ENCODE measurements at regions of chr6 and their contacts with region 1.

Region 1: GRCh38 chr6:156876302-156876701 is 99.1 kb downstream of the ARID1B start:
- DNase-seq: no peak
- ATAC-seq: peak; percentile 34; the same call in 1 of the 3 replicates
- H3K4me3 ChIP-seq: no peak overlapping the region
- H3K27ac ChIP-seq: no peak overlapping the region
- H3K4me1 ChIP-seq: peaks cover under 1% of the 10 kb centered on the region; the same call in 1 of the 2 replicates
- H3K27me3 ChIP-seq: no peaks in the 10 kb centered on the region
- CTCF ChIP-seq: peak in 2 of 3 experiments; percentile 16 to 18; a peak in 2 of 6 replicates
- EP300 ChIP-seq: no peak
- POLR2A ChIP-seq: 0 out of 2 replicates have a peak, but pooled peaks have one; percentile 28
- RAD21 ChIP-seq: 0 out of 2 replicates have a peak, but pooled peaks have one; percentile 12

Region 2: DNA sequence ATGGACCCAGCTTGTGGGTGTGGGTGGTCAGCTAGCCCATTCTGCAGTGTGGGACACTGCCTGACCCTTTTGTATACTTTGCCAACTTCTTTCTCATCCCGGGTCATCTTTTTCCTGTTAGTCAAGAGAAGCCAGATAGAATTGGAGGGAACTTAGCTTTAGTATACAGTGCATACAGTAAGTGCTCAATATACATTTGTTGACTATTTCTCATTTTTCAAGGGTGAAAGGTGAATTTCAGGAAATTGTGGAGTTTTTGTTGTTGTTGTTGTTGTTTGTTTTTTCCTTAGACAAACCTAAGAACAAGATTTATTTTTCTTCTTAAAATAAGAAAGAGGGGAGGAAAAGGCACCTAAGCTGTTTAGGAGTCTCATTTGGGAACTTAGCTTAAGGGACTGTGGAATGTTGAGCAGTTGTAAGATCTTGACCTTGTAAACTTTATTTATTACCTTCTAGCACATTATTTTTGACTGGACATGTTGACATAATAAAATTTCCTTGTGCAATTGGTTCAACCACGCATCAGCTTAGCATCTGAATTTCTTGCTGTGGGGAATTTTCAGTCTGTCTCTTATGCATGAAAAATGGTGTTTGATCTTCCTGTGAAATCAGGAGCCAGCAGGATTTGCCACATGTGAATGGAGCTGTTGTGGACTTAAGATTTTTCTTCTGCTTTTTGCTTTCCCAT is 14.5 kb after region 1 on chr6:
- CTCF ChIA-PET with region 1: interaction called, 6 read pairs
- POLR2A ChIA-PET with region 1: interaction called, 6 read pairs
- RAD21 ChIA-PET with region 1: no interaction called
- SMC1A ChIA-PET with region 1: interaction called, 12 read pairs
- in situ Hi-C with region 1: no loop called
- intact Hi-C with region 1: no loop called
- DNase-seq: no peak
- ATAC-seq: no peak
- H3K4me3 ChIP-seq: no peak overlapping the region
- H3K27ac ChIP-seq: no peak overlapping the region
- H3K4me1 ChIP-seq: peaks cover 4% of the 10 kb centered on the region; the same call in 1 of the 2 replicates
- H3K27me3 ChIP-seq: no peaks in the 10 kb centered on the region
- CTCF ChIP-seq: no peak
- EP300 ChIP-seq: no peak
- POLR2A ChIP-seq: no peak
- RAD21 ChIP-seq: no peak

Measured in GM12878 (cell line).